CD8-positive, alpha-beta T cell (primary cell): ENCODE measurements at regions of chrX and their contacts with region 1.

Region 1: GRCh38 chrX:39427906-39428305 is 626.6 kb downstream of the MID1IP1 start:
- DNase-seq: no peak
- ATAC-seq: no peak
- H3K4me3 ChIP-seq: no peak overlapping the region
- H3K4me3 Mint-ChIP-seq: no peak overlapping the region
- H3K27ac ChIP-seq: no peak overlapping the region
- H3K27ac Mint-ChIP-seq: peak overlapping the region; percentile 81
- H3K4me1 ChIP-seq: peaks cover 14% of the 10 kb centered on the region
- H3K4me1 Mint-ChIP-seq: peaks cover 26% of the 10 kb centered on the region
- H3K27me3 ChIP-seq: no peaks in the 10 kb centered on the region
- H3K27me3 Mint-ChIP-seq: no peaks in the 10 kb centered on the region
- CTCF ChIP-seq: no peak

Region 2: DNA sequence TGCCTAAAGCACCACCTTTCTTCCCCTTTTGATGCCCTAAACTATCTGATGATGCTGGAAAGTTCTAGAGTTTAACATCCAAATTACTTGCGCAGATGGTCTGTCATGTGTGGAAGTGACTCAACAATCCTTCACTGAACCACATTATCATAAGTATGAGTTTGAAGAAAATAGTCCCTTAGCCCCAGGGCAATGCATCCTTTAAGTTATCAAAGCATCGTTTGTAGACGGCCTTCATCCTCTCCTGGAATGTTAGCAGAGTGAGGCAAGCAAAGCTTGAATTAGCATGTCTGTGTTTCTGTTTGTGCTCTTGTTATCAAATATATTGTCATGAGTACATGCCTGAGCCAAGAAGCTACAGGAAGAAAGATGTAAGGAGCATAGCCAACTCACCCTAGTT is 55.8 kb before region 1 on chrX:
- CTCF ChIA-PET with region 1: no interaction called
- POLR2A ChIA-PET with region 1: no interaction called
- intact Hi-C with region 1: loop called in 1 of 2 experiments (anchors 5 kb)
- DNase-seq: no peak
- ATAC-seq: no peak
- H3K4me3 ChIP-seq: no peak overlapping the region
- H3K4me3 Mint-ChIP-seq: no peak overlapping the region
- H3K27ac ChIP-seq: no peak overlapping the region
- H3K27ac Mint-ChIP-seq: no peak overlapping the region
- H3K4me1 ChIP-seq: no peaks in the 10 kb centered on the region
- H3K4me1 Mint-ChIP-seq: no peaks in the 10 kb centered on the region
- H3K27me3 ChIP-seq: no peaks in the 10 kb centered on the region
- H3K27me3 Mint-ChIP-seq: no peaks in the 10 kb centered on the region
- CTCF ChIP-seq: no peak

Region 3: GRCh38 chrX:39398963-39399261 is 29.0 kb before region 1 on chrX:
- CTCF ChIA-PET with region 1: no interaction called
- POLR2A ChIA-PET with region 1: no interaction called
- intact Hi-C with region 1: no loop called
- DNase-seq: no peak
- ATAC-seq: no peak
- H3K4me3 ChIP-seq: no peak overlapping the region
- H3K4me3 Mint-ChIP-seq: no peak overlapping the region
- H3K27ac ChIP-seq: no peak overlapping the region
- H3K27ac Mint-ChIP-seq: no peak overlapping the region
- H3K4me1 ChIP-seq: no peaks in the 10 kb centered on the region
- H3K4me1 Mint-ChIP-seq: no peaks in the 10 kb centered on the region
- H3K27me3 ChIP-seq: no peaks in the 10 kb centered on the region
- H3K27me3 Mint-ChIP-seq: no peaks in the 10 kb centered on the region
- CTCF ChIP-seq: no peak